Esophagus muscularis mucosa (tissue), 4 donors: ENCODE measurements at regions of chr2 and their contacts with region 1.

Region 1: GRCh38 chr2:10408649-10409579 is 39.2 kb downstream of the ODC1 start:
- DNase-seq: no peak
- H3K4me3 ChIP-seq: peak overlapping the region in 1 of 4 donors; percentile 7
- H3K27ac ChIP-seq: peak overlapping the region in 3 of 4 donors; percentile 70 to 72 (median 72)
- H3K4me1 ChIP-seq: peaks cover 57 to 62% (median 60%) of the 10 kb centered on the region in 4 donors
- H3K27me3 ChIP-seq: no peaks in the 10 kb centered on the region
- CTCF ChIP-seq: peak in 2 of 3 experiments; percentile 91 to 95
- EP300 ChIP-seq: no peak
- POLR2A ChIP-seq: no peak

Region 2: GRCh38 chr2:10302479-10303180 is 106.3 kb before region 1 on chr2 and contains the start of gene HPCAL1:
- intact Hi-C with region 1: loop called (anchors 5 kb)
- DNase-seq: no peak
- H3K4me3 ChIP-seq: peak within 1 kb of the TSS; percentile 76 to 98 (median 92)
- H3K27ac ChIP-seq: peak within 1 kb of the TSS; percentile 73 to 87 (median 83)
- H3K4me1 ChIP-seq: peaks cover 33 to 53% (median 48%) of the 10 kb centered on the region in 4 donors
- H3K27me3 ChIP-seq: no peaks in the 10 kb centered on the region
- CTCF ChIP-seq: peak; percentile 50 to 69 (median 57)
- EP300 ChIP-seq: no peak
- POLR2A ChIP-seq: peak; percentile 85
- total RNA-seq, gene HPCAL1: 34.5 to 54.2 (median 41.3) TPM